ENCODE measurements at regions of chr1 and their contacts with region 1.

Region 1: GRCh38 chr1:21909787-21910503 is 27.2 kb downstream of the HSPG2 start:
- DNase-seq: peak; percentile 91
- H3K4me3 ChIP-seq: no peak overlapping the region
- H3K27ac ChIP-seq: peak overlapping the region; percentile 90 to 99 (median 98)
- H3K4me1 ChIP-seq: peaks cover 0 to 100% (median 100%) of the 10 kb centered on the region in 4 donors
- H3K27me3 ChIP-seq: no peaks in the 10 kb centered on the region
- CTCF ChIP-seq: no peak
- EP300 ChIP-seq: no peak
- POLR2A ChIP-seq: no peak

Region 2: DNA sequence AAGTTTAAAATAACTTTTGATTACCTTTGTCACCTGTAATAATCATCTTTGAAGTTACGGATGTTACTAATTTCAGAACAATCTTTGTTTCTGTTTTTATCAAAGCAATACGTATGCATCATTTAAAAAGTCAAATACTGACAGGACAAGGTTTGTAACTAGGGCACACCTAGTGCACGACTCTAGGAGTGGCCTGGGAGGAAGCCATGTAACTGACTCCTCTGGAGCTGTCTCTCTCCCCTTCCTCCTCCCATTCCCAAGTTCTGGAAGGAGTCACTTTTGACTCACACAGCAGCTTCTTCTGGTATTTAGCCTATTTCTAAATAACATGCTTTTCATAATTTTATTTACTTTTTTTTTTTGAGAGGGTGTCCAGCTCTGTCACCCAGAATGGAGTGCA is 229.0 kb before region 1 on chr1:
- intact Hi-C with region 1: no loop called
- DNase-seq: no peak
- H3K4me3 ChIP-seq: no peak overlapping the region
- H3K27ac ChIP-seq: no peak overlapping the region
- H3K4me1 ChIP-seq: no peaks in the 10 kb centered on the region
- H3K27me3 ChIP-seq: no peaks in the 10 kb centered on the region
- CTCF ChIP-seq: no peak
- EP300 ChIP-seq: no peak
- POLR2A ChIP-seq: no peak

Region 3: DNA sequence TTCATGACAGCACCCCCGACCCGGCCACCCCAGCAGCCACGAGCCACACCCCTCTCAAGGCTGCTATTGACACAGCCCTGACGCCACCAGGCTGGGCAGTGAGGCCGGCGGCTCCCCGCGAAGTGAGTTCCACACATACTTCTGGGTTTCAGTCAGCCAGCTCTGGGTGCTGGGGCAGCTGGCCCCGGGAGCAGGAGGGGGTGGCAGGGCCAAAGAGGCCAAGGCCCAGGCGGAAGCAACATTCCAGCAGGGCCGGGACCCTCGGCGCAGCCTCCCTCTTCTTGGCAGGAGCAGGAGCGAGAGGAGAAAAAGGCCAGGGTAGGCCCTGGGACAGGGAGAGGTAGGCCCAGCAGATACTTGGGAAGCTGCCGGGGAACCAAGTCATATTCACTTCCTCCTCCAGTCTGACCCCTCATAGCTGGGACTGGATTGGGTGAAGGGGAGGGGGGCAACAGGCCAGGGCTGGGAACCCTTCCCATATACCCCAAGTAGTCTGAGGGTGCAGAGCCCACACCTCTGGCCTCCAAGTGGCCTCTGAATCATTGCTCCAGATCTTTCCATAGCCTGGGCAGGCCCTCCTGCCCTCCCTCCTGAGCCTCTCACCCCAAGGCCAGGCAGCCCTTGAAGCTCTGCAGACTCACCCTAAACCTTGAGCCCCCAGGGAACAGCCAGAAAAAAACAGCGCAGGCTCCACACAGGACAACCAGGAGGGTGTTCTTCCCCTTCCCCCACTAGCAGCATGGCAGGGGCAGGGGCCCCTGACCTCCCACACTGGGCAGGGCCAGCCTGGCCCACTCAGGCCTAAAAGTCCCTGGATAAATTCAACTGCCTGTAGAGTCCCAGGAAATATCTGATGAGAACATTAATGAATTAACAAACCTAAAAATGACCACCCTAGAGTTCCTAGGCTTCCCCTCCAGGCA is 21.5 kb after region 1 on chr1:
- intact Hi-C with region 1: loop called (anchors 2 kb)
- DNase-seq: peak; percentile 92
- H3K4me3 ChIP-seq: peak overlapping the region in 3 of 4 donors; percentile 2 to 27 (median 8)
- H3K27ac ChIP-seq: peak overlapping the region; percentile 90 to 99 (median 98)
- H3K4me1 ChIP-seq: peaks cover 0 to 96% (median 91%) of the 10 kb centered on the region in 4 donors
- H3K27me3 ChIP-seq: no peaks in the 10 kb centered on the region
- CTCF ChIP-seq: no peak
- EP300 ChIP-seq: peak in 1 of 4 donors; percentile 57
- POLR2A ChIP-seq: no peak

Measured in sigmoid colon (tissue), 7 donors.